Esophagus muscularis mucosa (tissue), 4 donors: ENCODE measurements at regions of chr5 and their contacts with region 1.

Region 1: GRCh38 chr5:52922386-52922785 is 66.8 kb upstream of the ITGA2 start:
- DNase-seq: no peak
- H3K4me3 ChIP-seq: no peak overlapping the region
- H3K27ac ChIP-seq: peak overlapping the region; percentile 5 to 69 (median 48)
- H3K4me1 ChIP-seq: peaks cover 0 to 55% (median 49%) of the 10 kb centered on the region in 4 donors
- H3K27me3 ChIP-seq: no peaks in the 10 kb centered on the region
- CTCF ChIP-seq: no peak
- EP300 ChIP-seq: no peak
- POLR2A ChIP-seq: no peak

Region 2: DNA sequence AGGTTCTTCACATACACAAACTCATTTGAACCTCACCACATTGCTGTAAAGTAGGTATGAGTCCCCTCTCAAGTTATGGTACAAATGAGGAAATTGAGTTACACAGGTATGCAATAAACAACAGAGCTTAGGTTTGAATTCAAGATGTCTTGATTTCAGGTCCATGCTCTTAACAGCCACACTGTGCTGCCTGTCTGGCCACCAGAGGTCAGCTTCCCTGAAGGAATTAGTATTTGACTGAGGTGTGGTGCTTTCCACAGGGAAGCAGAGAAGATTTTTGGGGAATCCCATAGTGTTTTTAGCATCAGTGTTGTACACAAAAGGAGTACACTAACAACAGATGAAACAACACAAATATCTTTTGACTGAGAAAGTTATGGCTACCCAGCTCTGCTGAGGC is 229.1 kb before region 1 on chr5:
- intact Hi-C with region 1: loop called (anchors 5 kb)
- DNase-seq: no peak
- H3K4me3 ChIP-seq: no peak overlapping the region
- H3K27ac ChIP-seq: no peak overlapping the region
- H3K4me1 ChIP-seq: peaks cover 10 to 71% (median 61%) of the 10 kb centered on the region in 4 donors
- H3K27me3 ChIP-seq: no peaks in the 10 kb centered on the region
- CTCF ChIP-seq: peak; percentile 58 to 76 (median 59)
- EP300 ChIP-seq: no peak
- POLR2A ChIP-seq: no peak